ENCODE measurements at regions of chr10 and their contacts with region 1.

Region 1: GRCh38 chr10:74967911-74968645 is 141.7 kb downstream of the KAT6B start:
- DNase-seq: no peak
- CTCF ChIP-seq: no peak

Region 2: DNA sequence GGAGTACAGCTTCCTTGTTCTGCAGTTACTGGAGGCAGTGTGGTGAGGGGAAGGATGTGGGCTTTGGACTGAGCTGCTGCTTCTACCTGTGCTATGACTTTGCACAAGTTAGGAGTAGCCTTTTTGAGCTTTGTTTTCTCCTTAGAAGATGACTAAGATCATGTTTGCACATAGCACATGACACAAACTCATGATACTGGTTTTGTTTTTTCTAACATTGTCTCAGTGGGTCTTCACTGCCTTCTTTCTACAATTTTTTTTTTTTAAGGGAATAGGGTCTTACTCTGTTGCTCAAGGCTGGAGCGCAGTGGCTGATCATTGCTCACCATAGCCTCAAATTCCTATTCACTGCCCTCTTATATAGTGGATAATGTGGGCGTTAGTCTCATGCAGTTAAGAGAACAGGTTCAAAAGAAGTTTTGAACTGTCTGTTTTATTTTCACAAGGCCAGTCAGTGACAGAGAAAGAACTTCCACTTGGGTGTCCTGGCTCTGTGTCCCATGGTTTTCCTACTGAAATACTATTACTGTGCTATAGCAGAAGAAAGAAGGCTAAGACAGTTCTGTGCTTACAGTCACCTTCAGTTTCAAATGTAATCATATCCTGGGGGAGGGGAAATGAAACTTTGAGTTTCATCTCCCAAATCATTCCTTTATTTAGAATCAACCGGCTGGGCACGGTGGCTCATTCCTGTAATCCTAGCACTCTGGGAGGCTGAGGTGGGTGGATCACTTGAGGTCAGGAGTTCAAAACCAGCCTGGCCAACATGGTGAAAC is 69.7 kb before region 1 on chr10:
- CTCF ChIA-PET with region 1: no interaction called
- POLR2A ChIA-PET with region 1: no interaction called
- DNase-seq: peak; percentile 23
- CTCF ChIP-seq: no peak

Region 3: GRCh38 chr10:74977913-74978847 is 10.1 kb after region 1 on chr10:
- CTCF ChIA-PET with region 1: interaction called, 12 read pairs
- POLR2A ChIA-PET with region 1: no interaction called
- DNase-seq: peak; percentile 68
- CTCF ChIP-seq: no peak

Region 4: DNA sequence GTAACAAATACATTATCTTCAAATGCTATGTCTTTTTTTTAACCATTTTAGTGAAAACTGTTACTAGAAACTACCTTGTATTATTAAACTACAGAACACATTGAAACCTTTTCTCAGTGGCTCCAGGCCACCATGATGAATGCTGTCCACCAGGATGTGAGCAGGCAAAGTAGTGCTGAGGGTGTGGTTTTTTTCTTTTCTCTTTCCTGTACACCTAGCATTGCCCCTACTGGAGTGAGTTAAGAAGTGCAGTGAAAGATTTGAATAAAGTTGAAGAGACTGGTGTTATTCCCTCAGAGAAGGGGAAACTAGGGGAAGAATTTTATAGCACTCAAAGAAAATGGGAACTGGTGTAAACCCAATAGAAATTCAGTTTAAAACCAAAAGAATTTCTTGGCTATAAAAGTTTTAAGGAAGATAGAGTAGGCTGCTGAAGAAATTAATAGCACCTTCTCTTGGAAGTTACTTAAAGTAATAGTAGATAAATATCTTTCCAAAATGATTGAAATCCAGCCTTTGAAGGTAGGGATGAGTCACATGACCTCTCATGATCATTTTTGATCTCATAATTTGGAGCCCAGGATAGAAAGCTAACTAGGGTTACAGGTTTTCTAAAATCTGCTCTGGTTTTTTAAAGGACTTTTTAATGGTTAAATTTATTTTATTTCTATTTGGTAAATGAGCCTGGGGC is 23.5 kb after region 1 on chr10:
- CTCF ChIA-PET with region 1: no interaction called
- POLR2A ChIA-PET with region 1: no interaction called
- DNase-seq: no peak
- CTCF ChIP-seq: peak; percentile 13

Region 5: DNA sequence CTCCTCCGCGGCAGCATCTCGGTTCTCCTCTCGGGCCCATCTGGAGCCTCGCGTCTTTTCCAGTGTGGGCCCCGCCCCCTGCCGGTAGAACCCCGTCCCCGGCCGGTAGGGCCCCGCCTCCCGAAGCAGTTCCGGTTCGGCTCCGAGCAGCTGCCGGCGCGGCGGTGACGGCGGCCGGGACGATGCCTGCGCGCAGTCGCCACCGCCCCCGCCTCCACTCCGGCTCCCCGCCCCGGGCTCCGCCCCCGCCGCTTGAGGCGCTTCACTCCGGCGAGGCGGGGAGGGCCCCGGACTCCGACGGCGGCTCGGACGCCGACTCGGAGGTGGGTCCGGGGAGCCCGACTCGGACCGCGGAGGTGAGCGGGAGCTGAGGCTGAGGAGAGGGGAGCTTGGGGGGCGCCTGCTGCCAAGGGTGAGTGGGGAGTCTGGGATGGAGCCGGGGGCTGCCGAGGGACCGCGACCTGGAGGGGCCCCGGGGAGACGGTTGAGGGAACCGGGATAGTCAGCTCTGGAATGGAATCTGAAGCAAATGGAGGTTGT is 143.4 kb after region 1 on chr10 and contains the start of gene SAMD8:
- CTCF ChIA-PET with region 1: no interaction called
- POLR2A ChIA-PET with region 1: no interaction called
- DNase-seq: peak; percentile 100
- CTCF ChIP-seq: peak; percentile 0

Measured in GM10248 (cell line).